ENCODE measurements at regions of chr7 and their contacts with region 1.

Region 1: DNA sequence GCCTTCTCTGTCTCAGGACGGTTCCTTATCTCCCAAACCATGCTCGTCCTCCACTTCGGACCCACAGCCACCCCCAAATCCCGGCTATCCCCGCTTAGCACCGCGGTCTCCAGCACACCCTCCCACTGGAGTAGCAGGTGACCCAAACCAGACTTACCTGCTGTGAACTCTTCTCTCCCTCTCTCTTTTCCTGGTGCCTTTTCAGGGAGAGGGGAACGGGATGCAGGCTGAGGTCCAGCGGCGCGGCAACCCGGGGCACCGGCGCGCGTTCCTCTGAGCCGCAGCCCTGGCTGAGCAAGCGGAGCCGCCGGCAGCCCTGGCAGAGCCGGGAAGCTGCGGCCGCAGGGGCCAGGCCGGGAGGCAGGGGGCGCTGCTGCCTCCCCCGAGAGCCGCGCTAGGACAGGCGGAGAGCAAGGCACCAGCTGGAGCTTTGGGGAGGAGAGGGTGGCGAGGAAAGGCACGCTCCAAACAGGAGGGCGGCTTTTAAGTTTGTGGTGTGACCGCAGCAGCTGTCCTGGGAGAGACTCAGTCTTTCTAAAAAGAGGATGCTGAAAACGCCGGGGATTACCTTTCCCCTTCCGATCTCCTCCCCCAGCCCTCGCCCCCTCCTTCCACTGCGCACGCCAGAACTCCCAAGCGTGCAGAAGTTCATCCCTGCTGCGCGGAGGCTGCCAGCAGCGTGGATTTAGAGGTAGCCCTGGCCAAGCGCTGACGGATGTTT is at the start of gene SEMA3D:
- DNase-seq: no peak
- H3K4me3 ChIP-seq: peak within 1 kb of the TSS; percentile 5 to 69 (median 46)
- H3K27ac ChIP-seq: peak within 1 kb of the TSS in 3 of 4 donors; percentile 50 to 59 (median 59)
- H3K4me1 ChIP-seq: peaks cover 6 to 29% (median 8%) of the 10 kb centered on the region in 3 donors
- H3K27me3 ChIP-seq: peaks cover 0 to 51% (median 0%) of the 10 kb centered on the region in 4 donors
- CTCF ChIP-seq: peak in 5 of 6 experiments; percentile 39 to 58 (median 56)
- POLR2A ChIP-seq: no peak
- total RNA-seq, gene SEMA3D: 0.06 to 3.8 (median 0.14) TPM

Region 2: DNA sequence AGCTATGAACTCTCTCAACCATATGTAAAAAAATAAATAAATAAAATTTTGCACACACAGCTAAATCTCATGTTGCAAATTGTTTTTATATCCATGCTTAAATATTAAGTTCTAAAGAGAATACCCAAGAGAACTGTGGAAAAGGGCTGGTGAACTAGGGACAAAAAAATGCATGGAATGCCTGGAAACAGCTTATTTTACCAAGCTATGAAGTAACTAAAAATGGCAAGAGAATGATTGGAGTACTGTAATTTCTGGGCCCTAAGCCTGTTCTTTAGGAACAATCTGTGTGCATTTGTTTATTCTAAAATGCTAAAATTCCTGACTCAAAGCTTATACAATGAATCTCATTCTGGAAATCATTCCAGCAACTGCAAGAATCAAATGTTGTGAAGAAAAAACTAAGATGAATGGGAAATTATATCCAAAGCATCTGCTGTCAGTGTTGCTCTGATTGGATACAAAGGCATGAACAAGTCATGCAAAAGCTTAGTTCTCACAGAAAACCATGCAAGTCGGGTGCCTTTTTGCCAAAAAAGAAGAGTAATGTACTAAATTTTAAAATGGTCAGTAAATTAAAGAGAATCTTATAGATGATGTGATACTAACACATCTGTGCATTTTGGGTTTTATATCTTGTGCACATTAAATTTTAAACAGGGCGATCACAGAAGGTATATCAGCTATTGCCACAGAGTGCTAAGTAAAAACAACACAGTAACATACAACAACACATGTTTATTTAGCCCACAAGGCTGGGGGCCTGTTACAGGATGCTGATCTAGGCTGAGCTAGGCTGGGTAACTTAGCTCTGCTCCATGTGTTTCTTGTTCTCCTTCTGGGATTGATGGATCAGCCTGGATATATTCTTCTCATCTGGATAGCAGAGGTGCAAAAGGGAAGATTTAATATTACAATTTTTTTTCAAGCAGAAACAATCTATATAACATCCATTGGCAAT is 538.6 kb before region 1 on chr7:
- intact Hi-C with region 1: no loop called
- DNase-seq: no peak
- H3K4me3 ChIP-seq: no peak overlapping the region
- H3K27ac ChIP-seq: no peak overlapping the region
- H3K4me1 ChIP-seq: no peaks in the 10 kb centered on the region
- H3K27me3 ChIP-seq: no peaks in the 10 kb centered on the region
- CTCF ChIP-seq: no peak
- POLR2A ChIP-seq: no peak

Region 3: DNA sequence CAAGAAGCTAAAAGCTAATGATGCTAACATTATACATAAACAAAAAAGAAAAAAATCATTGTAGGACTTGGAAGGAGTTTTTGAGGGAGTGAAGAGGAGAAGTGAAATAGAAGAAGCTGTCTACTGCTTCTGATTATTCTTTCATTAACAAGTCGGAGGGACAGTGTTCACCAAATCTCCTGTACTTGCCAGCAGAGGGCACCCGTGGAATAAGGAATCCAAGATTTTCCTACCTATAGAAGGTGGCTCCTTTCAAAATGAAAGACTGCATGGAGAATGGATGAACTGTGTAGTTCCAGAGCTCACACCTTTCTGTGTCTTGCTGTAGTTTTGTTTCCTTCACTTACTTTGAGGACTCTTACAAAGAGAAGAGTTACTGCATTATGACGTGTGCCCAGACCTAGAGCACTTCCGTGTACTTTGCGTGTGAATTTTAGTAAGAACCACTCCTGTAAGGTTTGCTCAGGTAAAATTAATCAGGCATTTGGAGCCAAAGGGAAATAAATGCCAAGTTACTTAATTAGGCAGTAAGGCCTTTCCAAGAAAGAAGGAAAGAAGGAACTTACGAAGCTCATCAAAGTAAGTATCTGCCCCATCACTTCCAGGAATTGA is 145.0 kb before region 1 on chr7:
- intact Hi-C with region 1: loop called (anchors 10 kb)
- DNase-seq: no peak
- H3K4me3 ChIP-seq: no peak overlapping the region
- H3K27ac ChIP-seq: no peak overlapping the region
- H3K4me1 ChIP-seq: no peaks in the 10 kb centered on the region
- H3K27me3 ChIP-seq: no peaks in the 10 kb centered on the region
- CTCF ChIP-seq: peak in 5 of 6 experiments; percentile 43 to 66 (median 58)
- POLR2A ChIP-seq: no peak

Region 4: GRCh38 chr7:85508642-85509410 is 322.1 kb after region 1 on chr7:
- intact Hi-C with region 1: no loop called
- DNase-seq: no peak
- H3K4me3 ChIP-seq: no peak overlapping the region
- H3K27ac ChIP-seq: no peak overlapping the region
- H3K4me1 ChIP-seq: no peaks in the 10 kb centered on the region
- H3K27me3 ChIP-seq: no peaks in the 10 kb centered on the region
- CTCF ChIP-seq: no peak
- POLR2A ChIP-seq: no peak

Measured in esophagus squamous epithelium (tissue), 5 donors.